ENCODE measurements at regions of chr2 and their contacts with region 1.

Region 1: DNA sequence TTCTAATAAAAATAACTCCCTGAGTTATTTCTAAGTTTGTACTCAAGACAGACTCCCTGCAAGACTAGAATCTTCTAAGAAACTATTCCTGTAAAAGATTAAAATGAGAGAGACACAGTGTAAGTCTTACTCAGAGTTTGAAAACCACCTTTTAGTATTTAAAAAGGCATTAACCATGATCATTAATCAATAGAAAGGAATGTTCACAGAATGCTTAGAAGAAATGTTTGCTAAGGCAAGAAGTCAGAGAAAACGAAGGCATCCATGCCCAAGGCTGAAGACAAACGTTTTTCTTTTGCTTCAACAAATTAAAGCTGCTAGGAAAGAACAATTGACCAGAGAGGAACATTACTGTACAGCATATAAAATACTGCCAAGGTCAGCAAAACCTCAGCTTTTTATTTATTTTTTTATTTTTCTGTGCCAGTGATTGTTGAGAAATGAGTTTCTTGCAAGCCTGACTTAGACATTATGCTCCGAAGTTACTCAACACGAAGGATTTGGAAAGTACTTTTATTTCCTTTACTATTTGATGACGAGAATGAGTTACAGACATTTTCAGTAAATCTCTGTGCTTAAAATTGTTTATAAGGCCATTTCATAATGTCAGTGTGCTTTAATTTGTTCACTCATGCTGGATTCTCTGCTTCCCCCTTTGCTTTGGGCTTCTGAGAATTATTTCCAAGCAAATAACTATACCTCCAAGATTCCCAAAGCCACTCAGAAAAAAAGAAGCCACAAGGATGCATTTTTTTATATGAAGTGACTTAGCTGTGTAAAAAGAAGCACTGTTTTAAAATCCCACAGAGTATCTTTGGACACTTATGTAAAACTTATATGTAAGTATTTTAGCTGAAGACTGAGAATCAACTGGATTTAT is 20.5 kb downstream of the RND3 start:
- DNase-seq: no peak
- H3K4me3 ChIP-seq: no peak overlapping the region
- H3K27ac ChIP-seq: no peak overlapping the region
- H3K4me1 ChIP-seq: no peaks in the 10 kb centered on the region
- H3K27me3 ChIP-seq: no peaks in the 10 kb centered on the region
- CTCF ChIP-seq: no peak
- EP300 ChIP-seq: no peak
- POLR2A ChIP-seq: no peak
- RAD21 ChIP-seq: no peak

Region 2: DNA sequence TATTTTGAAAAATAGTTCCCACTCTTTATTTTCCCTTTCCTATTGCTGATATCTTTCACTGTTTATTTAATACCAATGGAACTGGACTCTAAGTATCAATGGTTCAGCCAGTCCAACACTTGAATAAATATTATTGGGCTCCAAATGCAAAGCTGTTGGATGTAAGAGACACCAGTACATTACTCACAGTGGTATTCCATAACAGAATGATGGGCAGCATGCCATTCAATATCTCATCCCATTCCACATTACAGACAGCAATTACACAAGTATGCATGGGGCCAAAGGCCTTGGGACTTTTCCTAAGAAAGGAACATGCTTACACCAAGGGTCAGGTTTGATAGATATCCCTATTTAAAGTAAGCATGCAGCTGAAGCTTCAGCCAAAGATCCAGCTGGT is 211.5 kb before region 1 on chr2:
- CTCF ChIA-PET with region 1: no interaction called
- POLR2A ChIA-PET with region 1: no interaction called
- DNase-seq: no peak
- H3K4me3 ChIP-seq: no peak overlapping the region
- H3K27ac ChIP-seq: no peak overlapping the region
- H3K4me1 ChIP-seq: no peaks in the 10 kb centered on the region; a peak in 1 of 7 replicates
- H3K27me3 ChIP-seq: no peaks in the 10 kb centered on the region
- CTCF ChIP-seq: no peak
- EP300 ChIP-seq: no peak
- POLR2A ChIP-seq: no peak
- RAD21 ChIP-seq: no peak

Region 3: DNA sequence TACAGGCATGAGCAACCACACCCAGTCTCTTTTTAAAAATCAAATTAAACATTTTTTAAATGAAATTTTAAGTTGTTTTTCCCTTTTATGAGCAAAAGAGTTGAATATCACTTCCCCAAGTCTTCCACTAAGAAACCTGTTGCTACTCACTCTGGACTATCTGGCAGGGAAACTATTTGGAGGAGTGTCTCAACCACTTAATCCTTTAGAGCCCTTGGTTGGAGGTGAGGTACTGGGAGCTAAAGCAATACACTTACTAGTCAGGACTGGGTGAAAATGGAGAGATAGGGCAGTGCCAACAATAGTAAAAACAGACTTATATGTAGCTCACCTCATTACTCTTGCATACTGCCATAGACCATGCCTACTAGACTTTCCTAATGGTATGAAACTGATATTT is 115.1 kb before region 1 on chr2:
- CTCF ChIA-PET with region 1: no interaction called
- POLR2A ChIA-PET with region 1: no interaction called
- DNase-seq: no peak
- H3K4me3 ChIP-seq: no peak overlapping the region
- H3K27ac ChIP-seq: no peak overlapping the region
- H3K4me1 ChIP-seq: peaks cover 0 to 5% (median 0%) of the 10 kb centered on the region in 4 experiments; a peak in 1 of 7 replicates
- H3K27me3 ChIP-seq: no peaks in the 10 kb centered on the region
- CTCF ChIP-seq: no peak
- EP300 ChIP-seq: no peak
- POLR2A ChIP-seq: no peak
- RAD21 ChIP-seq: no peak

Region 4: GRCh38 chr2:150478200-150478974 is 11.4 kb after region 1 on chr2:
- CTCF ChIA-PET with region 1: interaction called, 4 read pairs
- POLR2A ChIA-PET with region 1: interaction called, 13 read pairs
- DNase-seq: no peak
- H3K4me3 ChIP-seq: no peak overlapping the region
- H3K27ac ChIP-seq: no peak overlapping the region
- H3K4me1 ChIP-seq: peaks cover 1 to 13% (median 9%) of the 10 kb centered on the region in 4 experiments; a peak in 6 of 7 replicates
- H3K27me3 ChIP-seq: no peaks in the 10 kb centered on the region
- CTCF ChIP-seq: no peak
- EP300 ChIP-seq: no peak
- POLR2A ChIP-seq: no peak
- RAD21 ChIP-seq: no peak

Region 5: GRCh38 chr2:150528861-150529801 is 62.1 kb after region 1 on chr2:
- CTCF ChIA-PET with region 1: no interaction called
- POLR2A ChIA-PET with region 1: no interaction called
- DNase-seq: no peak
- H3K4me3 ChIP-seq: peak overlapping the region in 1 of 4 experiments; percentile 13; a peak in 2 of 8 replicates
- H3K27ac ChIP-seq: no peak overlapping the region
- H3K4me1 ChIP-seq: peaks cover 0 to 12% (median 4%) of the 10 kb centered on the region in 4 experiments; a peak in 3 of 7 replicates
- H3K27me3 ChIP-seq: no peaks in the 10 kb centered on the region
- CTCF ChIP-seq: no peak
- EP300 ChIP-seq: no peak
- POLR2A ChIP-seq: no peak
- RAD21 ChIP-seq: no peak

Measured in H1 (cell line).